Caco-2 (cell line): ENCODE measurements at regions of chr3 and their contacts with region 1.

Region 1: DNA sequence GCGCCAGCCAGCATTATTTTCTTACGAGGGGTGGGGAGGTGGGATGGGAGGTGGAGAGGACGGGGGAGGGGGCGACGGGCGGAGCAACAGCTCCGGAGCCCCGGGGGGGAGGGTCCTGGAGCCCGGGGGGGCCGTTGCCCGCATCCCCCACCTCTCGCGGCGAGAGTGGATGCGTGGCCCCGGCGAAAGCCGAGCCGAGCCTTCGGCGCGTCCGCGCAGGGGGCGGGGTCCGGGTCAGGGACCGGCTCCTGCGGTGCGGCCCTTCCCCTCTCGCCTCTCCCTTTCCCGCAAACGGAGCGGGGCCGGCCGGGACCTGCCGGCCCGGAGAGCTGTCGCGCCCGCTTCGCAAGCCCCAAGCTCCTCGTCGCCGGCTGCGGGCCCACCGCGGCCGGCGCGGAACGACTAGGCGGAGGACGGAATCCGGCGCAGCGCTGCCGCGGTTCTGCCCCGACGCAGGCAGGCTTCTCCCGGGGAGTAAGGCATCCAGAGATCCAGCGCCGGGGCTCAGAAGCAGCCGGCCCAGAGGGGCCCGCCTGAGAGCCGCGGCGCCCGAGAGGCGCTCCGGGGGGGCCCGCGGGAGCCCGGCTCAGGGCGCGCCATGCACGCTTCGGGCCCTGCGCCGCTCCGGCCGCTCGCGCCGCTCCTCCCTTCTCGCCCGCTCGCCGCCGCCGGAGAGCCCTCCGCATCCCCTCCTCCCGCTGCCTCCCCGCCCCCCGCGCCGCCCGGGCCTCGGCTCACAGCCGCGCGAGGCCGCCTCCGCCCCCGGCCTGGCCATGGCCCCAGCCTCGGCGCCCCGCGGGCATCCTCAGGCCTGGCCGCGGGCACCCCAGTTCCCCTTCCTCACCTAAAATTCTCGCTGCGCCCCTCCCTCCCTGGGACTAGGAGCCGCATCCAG is 459 bp upstream of the ADCY5 start:
- DNase-seq: peak in 1 of 2 experiments; percentile 37
- H3K4me3 ChIP-seq: peak overlapping the region; percentile 52
- H3K4me3 Mint-ChIP-seq: peak overlapping the region; percentile 62
- H3K27ac Mint-ChIP-seq: no peak overlapping the region
- H3K4me1 ChIP-seq: peaks cover 28% of the 10 kb centered on the region
- H3K4me1 Mint-ChIP-seq: peaks cover 7% of the 10 kb centered on the region
- H3K27me3 ChIP-seq: no peaks in the 10 kb centered on the region; the same call in 1 of the 2 replicates
- H3K27me3 Mint-ChIP-seq: peaks cover 6% of the 10 kb centered on the region
- CTCF ChIP-seq: no peak

Region 2: DNA sequence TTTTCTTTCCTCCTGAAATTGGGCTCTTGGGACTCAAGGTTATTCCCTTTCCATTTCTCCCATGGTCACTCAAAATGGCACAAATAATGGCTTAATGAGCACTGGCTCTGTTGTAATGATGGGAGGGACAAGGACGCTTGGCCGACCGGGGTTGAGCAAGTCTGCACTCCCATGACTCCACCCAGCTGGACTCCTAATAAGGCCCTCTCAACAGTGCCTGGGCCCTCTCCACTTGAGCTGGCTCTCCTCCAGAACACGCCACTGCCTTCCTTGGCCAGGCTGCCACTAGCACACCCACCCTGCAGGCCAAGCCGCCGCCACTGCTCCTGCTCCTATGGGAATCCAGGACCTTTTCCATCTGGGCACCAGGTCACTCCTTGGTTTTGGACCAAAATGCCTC is 42.8 kb before region 1 on chr3:
- CTCF ChIA-PET with region 1: no interaction called
- POLR2A ChIA-PET with region 1: interaction called, 3 read pairs
- intact Hi-C with region 1: loop called (anchors 5 kb)
- DNase-seq: no peak
- H3K4me3 ChIP-seq: no peak overlapping the region
- H3K4me3 Mint-ChIP-seq: no peak overlapping the region
- H3K27ac Mint-ChIP-seq: no peak overlapping the region
- H3K4me1 ChIP-seq: peaks cover 32% of the 10 kb centered on the region
- H3K4me1 Mint-ChIP-seq: peaks cover 9% of the 10 kb centered on the region
- H3K27me3 ChIP-seq: no peaks in the 10 kb centered on the region
- H3K27me3 Mint-ChIP-seq: no peaks in the 10 kb centered on the region
- CTCF ChIP-seq: no peak

Region 3: GRCh38 chr3:123489400-123490004 is 40.2 kb after region 1 on chr3:
- CTCF ChIA-PET with region 1: interaction called, 6 read pairs
- POLR2A ChIA-PET with region 1: no interaction called
- intact Hi-C with region 1: loop called (anchors 1 kb)
- DNase-seq: peak; percentile 58 to 81
- H3K4me3 ChIP-seq: no peak overlapping the region
- H3K4me3 Mint-ChIP-seq: no peak overlapping the region
- H3K27ac Mint-ChIP-seq: no peak overlapping the region
- H3K4me1 ChIP-seq: no peaks in the 10 kb centered on the region
- H3K4me1 Mint-ChIP-seq: no peaks in the 10 kb centered on the region
- H3K27me3 ChIP-seq: no peaks in the 10 kb centered on the region
- H3K27me3 Mint-ChIP-seq: no peaks in the 10 kb centered on the region
- CTCF ChIP-seq: peak; percentile 82 to 90

Region 4: GRCh38 chr3:123642182-123642956 is 193.0 kb after region 1 on chr3:
- CTCF ChIA-PET with region 1: no interaction called
- POLR2A ChIA-PET with region 1: no interaction called
- intact Hi-C with region 1: no loop called
- DNase-seq: peak; percentile 72 to 77
- H3K4me3 ChIP-seq: no peak overlapping the region
- H3K4me3 Mint-ChIP-seq: no peak overlapping the region
- H3K27ac Mint-ChIP-seq: no peak overlapping the region
- H3K4me1 ChIP-seq: no peaks in the 10 kb centered on the region
- H3K4me1 Mint-ChIP-seq: peaks cover 3% of the 10 kb centered on the region
- H3K27me3 ChIP-seq: no peaks in the 10 kb centered on the region
- H3K27me3 Mint-ChIP-seq: no peaks in the 10 kb centered on the region
- CTCF ChIP-seq: peak; percentile 64 to 73